B cell (primary cell): ENCODE measurements at regions of chr5 and their contacts with region 1.

Region 1: GRCh38 chr5:14270209-14270702 is 127.1 kb downstream of the TRIO start:
- DNase-seq: peak; percentile 70
- ATAC-seq: peak; percentile 65
- H3K4me3 ChIP-seq: no peak overlapping the region
- H3K4me3 Mint-ChIP-seq: no peak overlapping the region
- H3K27ac ChIP-seq: no peak overlapping the region
- H3K27ac Mint-ChIP-seq: no peak overlapping the region
- H3K4me1 ChIP-seq: peaks cover 7 to 8% of the 10 kb centered on the region in 2 donors
- H3K4me1 Mint-ChIP-seq: peaks cover 62% of the 10 kb centered on the region
- H3K27me3 ChIP-seq: no peaks in the 10 kb centered on the region
- H3K27me3 Mint-ChIP-seq: no peaks in the 10 kb centered on the region
- CTCF ChIP-seq: peak; percentile 87

Region 2: GRCh38 chr5:14011089-14012004 is 258.9 kb before region 1 on chr5:
- CTCF ChIA-PET with region 1: interaction called, 4 read pairs
- POLR2A ChIA-PET with region 1: no interaction called
- intact Hi-C with region 1: loop called (anchors 2 kb)
- DNase-seq: peak; percentile 85
- ATAC-seq: peak; percentile 87
- H3K4me3 ChIP-seq: peak overlapping the region; percentile 61 to 81 (median 72)
- H3K4me3 Mint-ChIP-seq: peak overlapping the region; percentile 91
- H3K27ac ChIP-seq: peak overlapping the region in 1 of 2 donors; percentile 14
- H3K27ac Mint-ChIP-seq: peak overlapping the region; percentile 60
- H3K4me1 ChIP-seq: peaks cover 5 to 8% of the 10 kb centered on the region in 2 donors
- H3K4me1 Mint-ChIP-seq: peaks cover 9% of the 10 kb centered on the region
- H3K27me3 ChIP-seq: peaks cover 0 to 16% (median 4%) of the 10 kb centered on the region in 4 experiments
- H3K27me3 Mint-ChIP-seq: peaks cover 28% of the 10 kb centered on the region
- CTCF ChIP-seq: no peak

Region 3: GRCh38 chr5:14250084-14250695 is 20.1 kb before region 1 on chr5:
- CTCF ChIA-PET with region 1: interaction called, 32 read pairs
- POLR2A ChIA-PET with region 1: interaction called, 3 read pairs
- intact Hi-C with region 1: no loop called
- DNase-seq: peak; percentile 35
- ATAC-seq: peak; percentile 15
- H3K4me3 ChIP-seq: no peak overlapping the region
- H3K4me3 Mint-ChIP-seq: peak overlapping the region; percentile 68
- H3K27ac ChIP-seq: peak overlapping the region; percentile 71 to 75
- H3K27ac Mint-ChIP-seq: peak overlapping the region; percentile 91
- H3K4me1 ChIP-seq: peaks cover 37 to 40% of the 10 kb centered on the region in 2 donors
- H3K4me1 Mint-ChIP-seq: peaks cover 83% of the 10 kb centered on the region
- H3K27me3 ChIP-seq: no peaks in the 10 kb centered on the region
- H3K27me3 Mint-ChIP-seq: no peaks in the 10 kb centered on the region
- CTCF ChIP-seq: no peak

Region 4: GRCh38 chr5:14286574-14287421 is 16.5 kb after region 1 on chr5:
- CTCF ChIA-PET with region 1: interaction called, 9 read pairs
- POLR2A ChIA-PET with region 1: no interaction called
- intact Hi-C with region 1: loop called (anchors 2 kb)
- DNase-seq: peak; percentile 84
- ATAC-seq: peak; percentile 94
- H3K4me3 ChIP-seq: no peak overlapping the region
- H3K4me3 Mint-ChIP-seq: peak overlapping the region; percentile 67
- H3K27ac ChIP-seq: peak overlapping the region; percentile 11 to 30
- H3K27ac Mint-ChIP-seq: peak overlapping the region; percentile 43
- H3K4me1 ChIP-seq: peaks cover 21 to 26% of the 10 kb centered on the region in 2 donors
- H3K4me1 Mint-ChIP-seq: peaks cover 32% of the 10 kb centered on the region
- H3K27me3 ChIP-seq: no peaks in the 10 kb centered on the region
- H3K27me3 Mint-ChIP-seq: no peaks in the 10 kb centered on the region
- CTCF ChIP-seq: no peak

Region 5: GRCh38 chr5:14581333-14581890 is 311.2 kb after region 1 on chr5 and contains the start of gene OTULINL:
- CTCF ChIA-PET with region 1: no interaction called
- POLR2A ChIA-PET with region 1: no interaction called
- intact Hi-C with region 1: no loop called
- DNase-seq: peak; percentile 85
- ATAC-seq: peak; percentile 97
- H3K4me3 ChIP-seq: peak within 1 kb of the TSS; percentile 31 to 70 (median 62)
- H3K4me3 Mint-ChIP-seq: peak within 1 kb of the TSS; percentile 74
- H3K27ac ChIP-seq: no peak within 1 kb of the TSS
- H3K27ac Mint-ChIP-seq: no peak within 1 kb of the TSS
- H3K4me1 ChIP-seq: peaks cover 9 to 14% of the 10 kb centered on the region in 2 donors
- H3K4me1 Mint-ChIP-seq: peaks cover 5% of the 10 kb centered on the region
- H3K27me3 ChIP-seq: peaks cover 0 to 44% (median 18%) of the 10 kb centered on the region in 4 experiments
- H3K27me3 Mint-ChIP-seq: peaks cover 39% of the 10 kb centered on the region
- CTCF ChIP-seq: no peak
- total RNA-seq, gene OTULINL: 0.80 and 0.81 TPM in 2 replicates

Region 6: GRCh38 chr5:14685757-14686156 is 415.5 kb after region 1 on chr5:
- CTCF ChIA-PET with region 1: no interaction called
- POLR2A ChIA-PET with region 1: no interaction called
- intact Hi-C with region 1: no loop called
- DNase-seq: peak; percentile 70
- ATAC-seq: peak; percentile 79
- H3K4me3 ChIP-seq: no peak overlapping the region
- H3K4me3 Mint-ChIP-seq: peak overlapping the region; percentile 8
- H3K27ac ChIP-seq: no peak overlapping the region
- H3K27ac Mint-ChIP-seq: no peak overlapping the region
- H3K4me1 ChIP-seq: peaks cover 5 to 10% of the 10 kb centered on the region in 2 donors
- H3K4me1 Mint-ChIP-seq: peaks cover 9% of the 10 kb centered on the region
- H3K27me3 ChIP-seq: no peaks in the 10 kb centered on the region
- H3K27me3 Mint-ChIP-seq: no peaks in the 10 kb centered on the region
- CTCF ChIP-seq: peak; percentile 74